ENCODE measurements at regions of chr11 and their contacts with region 1.

Region 1: GRCh38 chr11:12673924-12674570 is at the start of gene TEAD1:
- DNase-seq: peak; percentile 94
- ATAC-seq: peak; percentile 98
- H3K4me3 ChIP-seq: peak within 1 kb of the TSS; percentile 74
- H3K27ac ChIP-seq: peak within 1 kb of the TSS; percentile 93
- H3K4me1 ChIP-seq: peaks cover 33% of the 10 kb centered on the region
- H3K27me3 ChIP-seq: no peaks in the 10 kb centered on the region
- CTCF ChIP-seq: no peak
- total RNA-seq, gene TEAD1: 51.9 TPM

Region 2: GRCh38 chr11:12802418-12803085 is 128.5 kb after region 1 on chr11:
- intact Hi-C with region 1: loop called (anchors 10 kb)
- DNase-seq: peak; percentile 94
- ATAC-seq: peak; percentile 87 to 93
- H3K4me3 ChIP-seq: no peak overlapping the region
- H3K27ac ChIP-seq: peak overlapping the region; percentile 74
- H3K4me1 ChIP-seq: peaks cover 46% of the 10 kb centered on the region
- H3K27me3 ChIP-seq: no peaks in the 10 kb centered on the region
- CTCF ChIP-seq: no peak

Measured in lower lobe of right lung (tissue), 2 donors.